PC-9 (cell line): ENCODE measurements at regions of chr12 and their contacts with region 1.

Region 1: DNA sequence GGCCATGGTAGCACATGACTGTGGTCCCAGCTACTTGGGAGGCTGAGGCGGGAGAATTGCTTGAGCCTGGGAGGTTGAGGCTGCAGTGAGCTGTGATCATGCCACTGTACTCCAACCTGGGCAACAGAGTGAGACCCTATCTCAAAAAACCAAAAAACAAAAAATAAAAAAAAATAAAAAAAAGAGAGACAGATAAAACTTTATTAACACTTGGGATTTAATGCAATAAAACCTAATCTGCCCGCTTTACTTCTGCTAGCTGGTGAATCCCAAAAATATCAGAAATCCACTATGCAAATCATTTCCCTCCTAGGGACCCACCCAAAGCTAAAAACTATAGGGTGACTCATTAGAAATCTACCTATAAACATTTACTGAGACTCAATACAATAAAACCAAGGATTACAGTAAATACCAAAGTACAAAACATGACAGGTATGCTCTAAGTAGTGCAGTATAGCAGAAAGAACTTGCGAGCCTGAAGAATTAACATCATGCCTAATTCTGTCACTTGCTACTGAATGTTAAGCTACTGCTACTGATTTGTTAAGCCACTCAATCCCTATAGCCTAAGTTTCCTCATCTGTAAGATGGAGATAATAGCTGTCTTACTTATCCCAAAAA is 50.1 kb upstream of the STAC3 start:
- DNase-seq: no peak
- H3K4me3 ChIP-seq: no peak overlapping the region
- H3K27ac ChIP-seq: no peak overlapping the region
- H3K4me1 ChIP-seq: no peaks in the 10 kb centered on the region
- H3K27me3 ChIP-seq: no peaks in the 10 kb centered on the region
- CTCF ChIP-seq: no peak

Region 2: DNA sequence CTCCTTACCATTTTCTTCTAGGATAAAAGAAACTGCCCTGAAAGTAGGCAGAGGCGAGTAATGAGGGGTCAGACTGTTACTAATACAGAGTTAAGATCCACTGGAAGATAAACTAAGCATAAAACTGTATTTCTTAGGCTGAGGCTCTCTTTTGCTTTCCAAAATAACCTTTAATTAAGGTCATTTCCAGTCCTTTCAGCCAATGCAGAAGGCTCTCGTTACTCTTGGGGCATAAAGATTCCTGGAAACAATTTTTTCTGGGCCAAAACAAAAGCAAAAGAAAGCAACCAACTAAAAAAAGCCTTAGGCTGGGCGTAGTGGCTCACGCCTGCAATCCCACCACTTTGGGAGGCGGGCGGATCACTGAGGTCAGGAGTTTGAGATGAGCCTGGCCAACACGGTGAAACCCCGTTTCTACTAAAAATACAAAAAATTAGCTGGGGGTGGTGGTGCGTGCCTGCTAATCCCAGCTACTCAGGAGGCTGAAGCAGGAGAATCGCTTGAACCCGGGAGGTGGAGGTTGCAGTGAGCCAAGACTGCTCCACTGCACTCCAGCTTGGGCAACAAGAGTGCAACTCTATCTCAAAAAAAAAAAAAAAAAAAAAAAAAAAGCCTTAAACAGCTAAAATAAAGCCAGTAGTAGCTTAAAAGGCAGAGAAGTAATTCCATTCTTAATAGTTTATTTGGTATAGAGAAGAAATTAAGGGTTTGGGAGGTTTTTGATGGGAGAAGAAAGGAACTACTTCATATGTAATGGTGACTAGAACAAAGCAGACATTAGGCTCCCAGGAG is 18.8 kb after region 1 on chr12:
- CTCF ChIA-PET with region 1: interaction called, 14 read pairs
- POLR2A ChIA-PET with region 1: no interaction called
- intact Hi-C with region 1: no loop called
- DNase-seq: no peak
- H3K4me3 ChIP-seq: no peak overlapping the region
- H3K27ac ChIP-seq: no peak overlapping the region
- H3K4me1 ChIP-seq: 0 out of 2 replicates have a peak, but pooled peaks cover 6% of the 10 kb centered on the region
- H3K27me3 ChIP-seq: no peaks in the 10 kb centered on the region
- CTCF ChIP-seq: no peak